ENCODE measurements at regions of chr21 and their contacts with region 1.

Region 1: GRCh38 chr21:42684109-42684916 is 30.9 kb downstream of the PDE9A start:
- DNase-seq: peak; percentile 26 to 70 (median 52)
- ATAC-seq: peak; percentile 66 to 76
- H3K4me3 Mint-ChIP-seq: peak overlapping the region; percentile 69 to 92 (median 84)
- H3K27ac Mint-ChIP-seq: peak overlapping the region; percentile 87 to 98 (median 91)
- H3K4me1 Mint-ChIP-seq: peaks cover 24 to 62% (median 52%) of the 10 kb centered on the region in 4 donors
- H3K27me3 Mint-ChIP-seq: no peaks in the 10 kb centered on the region

Region 2: DNA sequence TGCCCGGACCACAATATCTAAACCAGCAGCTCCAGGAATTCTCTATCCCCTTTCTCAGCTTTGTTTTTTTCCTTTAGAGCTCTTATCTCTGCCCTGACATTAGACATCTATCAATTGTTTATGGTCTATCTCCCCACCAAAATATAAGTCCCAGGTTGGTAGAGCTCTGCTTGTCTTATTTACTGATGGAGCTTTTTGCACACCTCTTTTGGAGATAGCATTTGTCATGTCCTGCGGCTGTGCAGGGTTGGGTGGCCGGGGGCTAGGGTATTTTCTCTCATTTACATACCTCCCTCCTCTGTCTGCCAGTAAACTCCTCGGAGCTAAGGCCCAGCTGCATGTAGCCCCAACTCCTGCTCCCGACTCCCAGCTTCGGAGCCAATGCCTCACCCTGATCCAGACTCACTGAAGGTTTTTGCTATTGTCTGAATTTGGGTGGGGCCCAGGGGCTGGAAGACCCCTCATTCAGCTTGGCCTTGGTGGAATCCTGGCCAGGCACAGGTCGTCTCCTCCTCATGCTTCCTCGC is 42.0 kb before region 1 on chr21:
- POLR2A ChIA-PET with region 1: no interaction called
- DNase-seq: peak in 1 of 10 donors; percentile 21
- ATAC-seq: no peak
- H3K4me3 Mint-ChIP-seq: no peak overlapping the region
- H3K27ac Mint-ChIP-seq: peak overlapping the region in 2 of 10 donors; percentile 16 to 41
- H3K4me1 Mint-ChIP-seq: no peaks in the 10 kb centered on the region
- H3K27me3 Mint-ChIP-seq: peaks cover 3 to 11% (median 5%) of the 10 kb centered on the region in 5 donors

Region 3: DNA sequence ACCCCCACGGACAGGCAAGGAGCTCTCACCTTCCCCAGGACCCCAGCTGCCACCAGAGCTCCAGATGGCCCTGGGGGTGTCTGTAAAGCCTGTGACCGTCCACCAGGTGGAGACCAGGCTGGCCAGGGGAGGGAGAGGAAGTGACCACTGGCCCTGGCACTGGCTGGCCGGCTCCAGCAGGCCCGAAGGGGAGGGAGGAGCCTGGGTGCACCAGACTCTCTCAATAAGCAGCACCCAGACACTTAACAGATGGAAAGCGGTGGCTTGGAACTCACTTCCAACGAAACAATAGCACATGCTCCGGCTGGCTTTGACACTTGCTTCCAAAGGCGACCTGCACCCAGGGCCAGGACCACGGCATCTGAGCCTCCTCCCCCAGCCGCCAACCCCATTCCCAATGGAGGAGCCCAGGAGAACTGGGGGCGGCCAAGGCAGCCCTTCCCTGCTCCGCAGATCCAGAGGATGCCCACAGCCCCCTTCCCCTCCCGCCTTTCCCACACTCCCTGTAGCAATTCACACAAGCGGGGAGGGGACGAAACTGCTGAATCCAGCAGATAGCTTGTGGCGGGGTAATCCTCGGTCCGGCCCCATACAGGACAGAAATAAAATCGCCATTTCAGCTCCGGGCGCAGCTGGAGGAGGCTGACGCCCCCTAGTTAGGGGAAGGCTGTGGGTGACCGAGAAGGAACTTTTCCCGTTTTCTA is 31.6 kb before region 1 on chr21:
- POLR2A ChIA-PET with region 1: interaction called, 10 read pairs
- DNase-seq: peak in 1 of 10 donors; percentile 62
- ATAC-seq: no peak
- H3K4me3 Mint-ChIP-seq: peak overlapping the region; percentile 71 to 90 (median 81)
- H3K27ac Mint-ChIP-seq: peak overlapping the region in 9 of 10 donors; percentile 20 to 84 (median 46)
- H3K4me1 Mint-ChIP-seq: peaks cover 20 to 32% (median 27%) of the 10 kb centered on the region in 4 donors
- H3K27me3 Mint-ChIP-seq: peaks cover 0 to 11% (median 0%) of the 10 kb centered on the region in 5 donors

Region 4: DNA sequence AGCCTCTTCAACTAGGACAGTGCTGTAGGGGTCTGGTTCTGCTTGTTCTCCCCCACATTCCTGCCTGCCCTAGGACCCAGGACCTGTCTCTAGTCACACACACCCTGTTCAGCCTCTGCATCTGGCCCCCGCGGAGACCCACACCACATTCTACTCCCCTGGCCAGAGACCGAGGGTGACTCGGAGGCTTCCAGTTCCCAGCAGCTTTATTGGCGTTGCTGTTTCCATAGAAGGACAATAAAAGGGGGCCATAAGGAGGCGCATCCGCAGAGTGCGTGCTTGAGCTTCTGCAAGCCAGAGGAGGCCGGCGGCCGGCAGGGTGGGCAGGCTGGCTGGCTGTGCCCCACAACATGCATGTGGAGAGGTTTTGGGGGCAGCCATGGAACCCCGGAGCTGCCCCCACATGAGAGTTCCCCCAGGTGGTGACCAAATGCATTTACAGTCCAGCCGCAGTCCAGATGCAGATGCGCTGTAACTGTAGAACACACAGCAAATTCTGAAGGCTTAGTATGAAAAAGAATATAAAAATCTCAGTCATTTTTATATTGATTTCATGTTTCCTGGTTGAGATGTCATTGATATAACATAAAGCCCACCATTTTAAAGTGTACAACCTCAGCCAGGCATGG is 21.5 kb after region 1 on chr21:
- POLR2A ChIA-PET with region 1: no interaction called
- DNase-seq: no peak
- ATAC-seq: no peak
- H3K4me3 Mint-ChIP-seq: no peak overlapping the region
- H3K27ac Mint-ChIP-seq: peak overlapping the region in 1 of 10 donors; percentile 33
- H3K4me1 Mint-ChIP-seq: peaks cover 0 to 3% (median 0%) of the 10 kb centered on the region in 4 donors
- H3K27me3 Mint-ChIP-seq: no peaks in the 10 kb centered on the region

Region 5: GRCh38 chr21:42737951-42738590 is 53.8 kb after region 1 on chr21:
- POLR2A ChIA-PET with region 1: interaction called, 10 read pairs
- DNase-seq: peak in 7 of 10 donors; percentile 6 to 72 (median 31)
- ATAC-seq: peak; percentile 92
- H3K4me3 Mint-ChIP-seq: peak overlapping the region in 9 of 10 donors; percentile 69 to 87 (median 81)
- H3K27ac Mint-ChIP-seq: peak overlapping the region; percentile 74 to 100 (median 99)
- H3K4me1 Mint-ChIP-seq: peaks cover 18 to 61% (median 60%) of the 10 kb centered on the region in 4 donors
- H3K27me3 Mint-ChIP-seq: no peaks in the 10 kb centered on the region

Region 6: GRCh38 chr21:42746593-42747275 is 62.4 kb after region 1 on chr21:
- POLR2A ChIA-PET with region 1: interaction called, 10 read pairs
- DNase-seq: peak; percentile 30 to 85 (median 64)
- ATAC-seq: peak; percentile 80 to 83
- H3K4me3 Mint-ChIP-seq: peak overlapping the region; percentile 74 to 88 (median 81)
- H3K27ac Mint-ChIP-seq: peak overlapping the region; percentile 95 to 100 (median 98)
- H3K4me1 Mint-ChIP-seq: peaks cover 15 to 46% (median 36%) of the 10 kb centered on the region in 4 donors
- H3K27me3 Mint-ChIP-seq: no peaks in the 10 kb centered on the region

Measured in naive thymus-derived CD8-positive, alpha-beta T cell (primary cell).